ENCODE measurements at regions of chr10 and their contacts with region 1.

Region 1: GRCh38 chr10:95363303-95363912 is 72.6 kb upstream of the PDLIM1 start:
- DNase-seq: peak; percentile 47
- H3K4me3 Mint-ChIP-seq: no peak overlapping the region
- H3K27ac Mint-ChIP-seq: no peak overlapping the region
- H3K4me1 Mint-ChIP-seq: no peaks in the 10 kb centered on the region
- H3K27me3 Mint-ChIP-seq: peaks cover 6% of the 10 kb centered on the region

Region 2: DNA sequence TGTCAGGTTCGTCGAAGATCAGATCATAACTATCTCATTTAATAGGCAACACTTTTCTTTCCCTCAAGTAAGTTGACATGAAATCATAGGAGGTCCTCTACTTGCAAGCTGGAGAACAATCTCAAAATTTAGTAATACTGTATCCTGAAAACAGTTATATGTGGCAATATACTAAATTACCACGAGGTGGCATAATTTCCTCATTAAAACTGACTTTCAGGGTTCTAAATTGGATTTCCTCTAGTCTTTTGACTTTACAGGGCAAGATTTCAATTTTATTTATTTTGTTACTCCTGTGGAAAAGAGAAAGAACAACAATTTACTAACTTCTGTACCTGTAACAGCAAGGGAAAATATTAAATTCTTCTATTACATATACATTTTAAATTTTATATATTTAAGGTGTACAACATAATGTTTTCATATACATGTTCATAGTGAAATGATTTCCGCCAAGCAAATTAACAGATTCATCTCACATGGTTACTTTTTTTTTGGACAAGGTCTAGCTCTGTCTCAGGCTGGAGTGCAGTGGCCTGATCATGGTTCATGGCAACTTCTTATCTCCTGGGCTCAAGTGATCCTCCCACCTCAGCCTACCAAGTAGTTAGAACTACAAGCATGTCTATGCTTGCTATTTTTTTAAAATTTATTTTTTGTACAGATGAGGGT is 733.3 kb before region 1 on chr10:
- intact Hi-C with region 1: loop called (anchors 1 kb)
- DNase-seq: no peak
- H3K4me3 Mint-ChIP-seq: no peak overlapping the region
- H3K27ac Mint-ChIP-seq: no peak overlapping the region
- H3K4me1 Mint-ChIP-seq: no peaks in the 10 kb centered on the region
- H3K27me3 Mint-ChIP-seq: no peaks in the 10 kb centered on the region

Region 3: DNA sequence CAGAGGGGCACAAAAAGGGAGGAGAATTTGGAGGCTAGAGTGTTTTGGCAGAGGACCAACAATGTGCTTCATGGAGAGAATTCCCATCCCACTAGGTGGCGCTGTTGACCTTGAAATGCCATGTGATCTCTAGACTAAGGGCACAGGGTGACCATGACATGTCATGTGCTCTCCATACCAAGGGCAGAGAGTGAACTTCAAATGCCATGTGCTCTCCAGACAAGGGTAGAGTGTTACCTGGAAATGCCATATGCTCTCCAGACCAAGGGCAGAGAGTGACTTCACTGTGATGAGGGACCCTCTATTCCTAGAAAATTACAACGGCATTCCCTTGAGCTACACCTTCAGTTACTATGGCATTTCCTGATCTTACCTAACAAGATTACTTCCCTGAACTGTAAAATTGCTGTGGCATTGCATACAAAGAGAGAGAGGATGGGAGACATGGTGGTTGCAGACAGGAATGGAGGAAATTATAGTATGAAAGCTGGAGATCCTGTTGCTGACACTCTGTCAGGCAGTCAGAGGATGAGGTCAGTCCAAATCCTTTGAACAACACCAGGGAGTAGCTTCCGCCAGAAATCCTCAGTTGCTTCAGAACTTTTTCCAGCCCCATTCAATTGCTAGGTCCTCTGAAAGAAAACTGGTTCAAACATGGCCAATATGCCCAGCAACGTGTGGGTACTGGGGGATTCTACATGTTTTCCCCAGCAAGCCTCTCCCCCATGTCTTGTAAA is 230.2 kb before region 1 on chr10:
- intact Hi-C with region 1: loop called (anchors 1 kb)
- DNase-seq: peak; percentile 60
- H3K4me3 Mint-ChIP-seq: no peak overlapping the region
- H3K27ac Mint-ChIP-seq: no peak overlapping the region
- H3K4me1 Mint-ChIP-seq: no peaks in the 10 kb centered on the region
- H3K27me3 Mint-ChIP-seq: peaks cover 4% of the 10 kb centered on the region

Region 4: DNA sequence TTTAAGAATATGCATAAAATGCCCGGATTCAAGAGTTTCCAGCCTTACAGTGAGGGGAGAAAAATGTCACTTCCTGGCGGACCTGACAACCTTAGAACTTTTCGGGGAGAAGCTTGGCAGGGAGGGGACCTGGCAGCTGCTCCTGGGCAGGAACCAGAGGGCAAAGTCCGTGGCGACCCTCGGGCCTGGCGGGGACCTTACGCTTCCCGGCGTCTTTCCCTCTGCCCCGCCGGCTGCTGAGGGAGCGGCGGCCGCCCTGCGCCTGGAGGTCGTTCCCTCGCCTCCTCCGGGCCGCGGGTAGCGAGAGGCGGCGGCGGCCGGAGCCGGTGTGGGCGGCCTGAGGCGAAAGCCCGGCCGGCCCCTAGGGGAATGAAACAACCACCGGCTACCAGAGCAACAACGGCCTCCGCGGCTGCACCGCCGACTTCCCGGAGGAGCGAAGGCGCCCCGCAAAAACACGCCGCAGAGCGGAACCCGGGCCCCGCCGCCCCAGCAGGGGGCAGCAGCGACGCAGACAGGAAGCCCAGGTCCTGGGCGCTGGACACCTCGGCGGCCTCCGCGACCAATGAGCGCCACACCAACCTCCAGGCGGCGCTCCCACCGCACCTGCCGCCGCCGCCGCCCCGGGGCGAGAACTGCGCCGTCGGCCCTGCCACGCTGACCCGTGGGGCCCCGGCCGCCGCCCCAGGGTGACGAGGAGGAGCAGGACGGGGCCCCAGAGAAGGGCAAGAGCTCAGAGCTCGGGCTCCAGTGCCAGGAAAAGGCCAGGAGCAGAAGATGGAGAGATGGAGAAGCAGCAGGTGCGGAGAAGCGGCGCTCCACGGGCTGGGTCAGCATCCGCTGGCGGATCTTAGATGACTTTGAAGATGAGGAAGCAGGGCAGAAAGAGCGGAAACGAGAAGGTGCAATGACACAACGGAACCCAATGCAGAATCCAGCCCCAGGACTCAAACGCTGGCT is 179.9 kb before region 1 on chr10:
- intact Hi-C with region 1: loop called (anchors 1 kb)
- DNase-seq: peak; percentile 74
- H3K4me3 Mint-ChIP-seq: peak overlapping the region; percentile 80
- H3K27ac Mint-ChIP-seq: peak overlapping the region; percentile 78
- H3K4me1 Mint-ChIP-seq: peaks cover 5% of the 10 kb centered on the region
- H3K27me3 Mint-ChIP-seq: peaks cover 33% of the 10 kb centered on the region

Region 5: DNA sequence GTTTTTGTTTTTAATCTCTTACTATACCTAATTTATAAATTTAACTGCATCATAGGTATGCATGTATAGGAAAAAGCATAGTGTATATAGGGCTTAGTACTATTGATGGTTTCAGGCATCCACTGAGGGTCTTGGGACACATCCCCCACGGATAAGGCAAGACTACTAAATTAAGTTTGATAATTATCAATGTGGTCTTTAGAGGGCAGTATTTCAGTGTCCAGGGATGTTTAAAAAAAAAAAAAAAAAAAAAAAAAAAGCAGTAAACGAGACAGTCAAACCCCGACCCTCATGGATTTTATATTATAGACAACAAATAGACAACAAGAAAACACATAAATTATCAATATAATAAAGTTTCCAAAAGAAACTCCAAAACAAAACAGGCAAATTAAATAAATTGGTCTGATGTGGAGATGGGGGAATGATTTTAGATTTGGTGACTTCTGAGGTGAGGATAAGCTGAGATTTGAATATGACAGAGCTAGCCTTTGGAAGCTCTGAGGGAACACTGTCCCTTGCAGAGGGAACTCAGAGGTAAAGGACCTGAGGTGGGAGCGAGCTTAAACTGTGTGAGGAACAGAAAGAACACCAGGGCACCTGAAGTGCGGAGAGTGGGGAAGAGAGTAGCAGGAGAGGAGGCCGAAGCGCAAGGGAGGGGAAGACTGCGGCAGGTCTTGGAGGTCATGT is 154.6 kb before region 1 on chr10:
- intact Hi-C with region 1: loop called (anchors 2 kb)
- DNase-seq: no peak
- H3K4me3 Mint-ChIP-seq: no peak overlapping the region
- H3K27ac Mint-ChIP-seq: no peak overlapping the region
- H3K4me1 Mint-ChIP-seq: no peaks in the 10 kb centered on the region
- H3K27me3 Mint-ChIP-seq: no peaks in the 10 kb centered on the region

Region 6: GRCh38 chr10:95290461-95291364 is 72.7 kb before region 1 on chr10 and contains the start of gene PDLIM1:
- intact Hi-C with region 1: loop called (anchors 5 kb)
- DNase-seq: peak; percentile 51
- H3K4me3 Mint-ChIP-seq: peak within 1 kb of the TSS; percentile 81
- H3K27ac Mint-ChIP-seq: peak within 1 kb of the TSS; percentile 51
- H3K4me1 Mint-ChIP-seq: peaks cover 32% of the 10 kb centered on the region
- H3K27me3 Mint-ChIP-seq: peaks cover 43% of the 10 kb centered on the region
- total RNA-seq, gene PDLIM1: 2.6 and 2.9 TPM in 2 replicates

Region 7: GRCh38 chr10:95485445-95485844 is 122.0 kb after region 1 on chr10:
- intact Hi-C with region 1: no loop called
- DNase-seq: no peak
- H3K4me3 Mint-ChIP-seq: no peak overlapping the region
- H3K27ac Mint-ChIP-seq: peak overlapping the region; percentile 64
- H3K4me1 Mint-ChIP-seq: no peaks in the 10 kb centered on the region
- H3K27me3 Mint-ChIP-seq: no peaks in the 10 kb centered on the region